PC-3 (cell line): ENCODE measurements at regions of chr3 and their contacts with region 1.

Region 1: GRCh38 chr3:24680214-24680967 is 185.7 kb upstream of the THRB start:
- DNase-seq: peak; percentile 77
- ATAC-seq: peak; percentile 29; the same call in 1 of the 2 replicates
- H3K4me3 ChIP-seq: no peak overlapping the region
- H3K27ac ChIP-seq: no peak overlapping the region
- H3K4me1 ChIP-seq: peaks cover 37% of the 10 kb centered on the region
- H3K27me3 ChIP-seq: no peaks in the 10 kb centered on the region
- CTCF ChIP-seq: peak; percentile 95

Region 2: GRCh38 chr3:24185738-24186384 is 494.5 kb before region 1 on chr3:
- CTCF ChIA-PET with region 1: interaction called, 9 read pairs
- POLR2A ChIA-PET with region 1: no interaction called
- intact Hi-C with region 1: loop called (anchors 1 kb)
- DNase-seq: peak; percentile 81
- ATAC-seq: peak; percentile 91
- H3K4me3 ChIP-seq: no peak overlapping the region
- H3K27ac ChIP-seq: no peak overlapping the region
- H3K4me1 ChIP-seq: no peaks in the 10 kb centered on the region
- H3K27me3 ChIP-seq: no peaks in the 10 kb centered on the region
- CTCF ChIP-seq: peak; percentile 85

Region 3: GRCh38 chr3:24270204-24270691 is 410.1 kb before region 1 on chr3:
- CTCF ChIA-PET with region 1: interaction called, 4 read pairs
- POLR2A ChIA-PET with region 1: no interaction called
- intact Hi-C with region 1: loop called (anchors 2 kb)
- DNase-seq: no peak
- ATAC-seq: no peak
- H3K4me3 ChIP-seq: no peak overlapping the region
- H3K27ac ChIP-seq: no peak overlapping the region
- H3K4me1 ChIP-seq: peaks cover 32% of the 10 kb centered on the region
- H3K27me3 ChIP-seq: no peaks in the 10 kb centered on the region
- CTCF ChIP-seq: no peak

Region 4: GRCh38 chr3:24514119-24514518 is 166.3 kb before region 1 on chr3:
- CTCF ChIA-PET with region 1: no interaction called
- POLR2A ChIA-PET with region 1: no interaction called
- intact Hi-C with region 1: loop called (anchors 1 kb)
- DNase-seq: peak; percentile 83
- ATAC-seq: peak; percentile 77
- H3K4me3 ChIP-seq: peak overlapping the region; percentile 36; the same call in 1 of the 2 replicates
- H3K27ac ChIP-seq: peak overlapping the region; percentile 89
- H3K4me1 ChIP-seq: peaks cover 41% of the 10 kb centered on the region
- H3K27me3 ChIP-seq: no peaks in the 10 kb centered on the region
- CTCF ChIP-seq: no peak

Region 5: GRCh38 chr3:24591661-24592522 is 88.5 kb before region 1 on chr3:
- CTCF ChIA-PET with region 1: no interaction called
- POLR2A ChIA-PET with region 1: no interaction called
- intact Hi-C with region 1: loop called (anchors 2 kb)
- DNase-seq: peak; percentile 97
- ATAC-seq: peak; percentile 93
- H3K4me3 ChIP-seq: peak overlapping the region; percentile 19; the same call in 1 of the 2 replicates
- H3K27ac ChIP-seq: peak overlapping the region; percentile 98
- H3K4me1 ChIP-seq: peaks cover 59% of the 10 kb centered on the region
- H3K27me3 ChIP-seq: no peaks in the 10 kb centered on the region
- CTCF ChIP-seq: no peak

Region 6: DNA sequence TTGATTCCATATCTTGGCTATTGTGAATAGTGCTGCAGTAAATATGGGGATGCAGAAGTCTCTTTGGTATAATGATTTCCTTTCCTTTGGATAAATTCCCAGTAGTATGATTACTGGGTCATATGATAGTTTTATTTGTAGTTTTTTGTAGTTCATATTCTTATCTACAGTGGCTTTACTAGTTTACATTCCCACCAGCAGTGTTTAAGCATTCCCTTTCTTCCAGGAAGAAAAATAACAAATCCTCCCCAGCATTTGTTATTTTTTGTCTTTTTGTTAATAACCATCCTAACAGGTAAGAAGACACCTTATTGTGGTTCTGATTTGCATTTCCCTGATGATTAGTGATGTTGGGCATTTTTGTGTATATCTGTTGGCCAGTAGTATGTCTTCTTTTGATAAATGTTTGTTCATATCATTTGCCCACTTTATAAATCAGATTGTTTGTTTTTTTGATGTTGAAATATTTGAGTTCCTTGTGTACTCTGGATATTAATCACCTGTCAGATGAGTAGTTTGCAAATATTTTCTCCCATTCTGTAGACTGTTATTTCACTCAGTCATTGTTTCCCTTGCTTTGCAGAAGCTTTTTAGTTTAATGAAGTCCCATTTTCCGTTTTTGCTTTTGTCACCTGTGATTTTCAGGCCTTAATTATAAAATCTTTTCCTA is 22.4 kb before region 1 on chr3:
- CTCF ChIA-PET with region 1: interaction called, 5 read pairs
- POLR2A ChIA-PET with region 1: no interaction called
- intact Hi-C with region 1: loop called (anchors 2 kb)
- DNase-seq: peak; percentile 72
- ATAC-seq: peak; percentile 91
- H3K4me3 ChIP-seq: peak overlapping the region; percentile 18; the same call in 1 of the 2 replicates
- H3K27ac ChIP-seq: peak overlapping the region; percentile 48
- H3K4me1 ChIP-seq: peaks cover 20% of the 10 kb centered on the region
- H3K27me3 ChIP-seq: no peaks in the 10 kb centered on the region
- CTCF ChIP-seq: no peak